Endothelial cell of umbilical vein (primary cell): ENCODE measurements at regions of chr1 and their contacts with region 1.

Region 1: GRCh38 chr1:40583980-40584379 is 52.5 kb downstream of the ZNF684 start:
- DNase-seq: no peak
- H3K4me3 ChIP-seq: no peak overlapping the region
- H3K27ac ChIP-seq: no peak overlapping the region
- H3K4me1 ChIP-seq: no peaks in the 10 kb centered on the region
- H3K27me3 ChIP-seq: peaks cover 3 to 4% of the 10 kb centered on the region in 2 experiments
- CTCF ChIP-seq: no peak
- POLR2A ChIP-seq: no peak

Region 2: DNA sequence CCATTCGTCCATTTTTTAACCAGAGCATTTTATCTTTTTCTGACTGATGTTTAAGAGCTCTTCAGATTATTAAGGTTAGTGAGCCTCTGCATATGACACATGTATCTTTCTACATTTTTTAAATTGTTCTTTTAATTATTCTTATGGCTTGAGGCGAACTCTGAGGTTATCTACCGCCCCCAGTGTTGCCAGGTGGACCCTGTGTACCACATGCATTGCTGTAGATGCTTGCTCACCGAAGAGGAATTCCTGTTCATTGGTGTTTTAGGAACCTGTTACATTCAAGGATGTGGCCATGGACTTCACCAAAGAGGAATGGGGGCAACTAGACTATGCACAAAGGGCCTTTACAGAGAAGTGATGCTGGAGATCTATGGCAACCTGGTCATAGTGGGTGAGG is 20.7 kb before region 1 on chr1:
- CTCF ChIA-PET with region 1: interaction called, 3 read pairs
- POLR2A ChIA-PET with region 1: interaction called, 14 read pairs
- dilution Hi-C with region 1: no loop called
- intact Hi-C with region 1: no loop called
- DNase-seq: no peak
- H3K4me3 ChIP-seq: no peak overlapping the region
- H3K27ac ChIP-seq: no peak overlapping the region
- H3K4me1 ChIP-seq: no peaks in the 10 kb centered on the region
- H3K27me3 ChIP-seq: peaks cover under 1 to 2% of the 10 kb centered on the region in 2 experiments
- CTCF ChIP-seq: no peak
- POLR2A ChIP-seq: no peak

Region 3: GRCh38 chr1:41580520-41581172 is 996.7 kb after region 1 on chr1:
- CTCF ChIA-PET with region 1: no interaction called
- POLR2A ChIA-PET with region 1: no interaction called
- dilution Hi-C with region 1: no loop called
- intact Hi-C with region 1: no loop called
- DNase-seq: no peak
- H3K4me3 ChIP-seq: no peak overlapping the region
- H3K27ac ChIP-seq: no peak overlapping the region
- H3K4me1 ChIP-seq: no peaks in the 10 kb centered on the region
- H3K27me3 ChIP-seq: no peaks in the 10 kb centered on the region
- CTCF ChIP-seq: no peak
- POLR2A ChIP-seq: no peak